Activated T-helper 1 cell treated with anti-CD3 and anti-CD28 coated beads, Interleukin-12 subunit alpha, Interleukin-12 subunit beta, Interleukin-2, Interleukin-4 antibody, amounts not matched to agents 30 ng/mL and 10 ng/mL and 1 ng/mL, durations not matched to agents 14 hours and 24 hours and 36 hours (primary cell): ENCODE measurements at regions of chr13 and their contacts with region 1.

Region 1: DNA sequence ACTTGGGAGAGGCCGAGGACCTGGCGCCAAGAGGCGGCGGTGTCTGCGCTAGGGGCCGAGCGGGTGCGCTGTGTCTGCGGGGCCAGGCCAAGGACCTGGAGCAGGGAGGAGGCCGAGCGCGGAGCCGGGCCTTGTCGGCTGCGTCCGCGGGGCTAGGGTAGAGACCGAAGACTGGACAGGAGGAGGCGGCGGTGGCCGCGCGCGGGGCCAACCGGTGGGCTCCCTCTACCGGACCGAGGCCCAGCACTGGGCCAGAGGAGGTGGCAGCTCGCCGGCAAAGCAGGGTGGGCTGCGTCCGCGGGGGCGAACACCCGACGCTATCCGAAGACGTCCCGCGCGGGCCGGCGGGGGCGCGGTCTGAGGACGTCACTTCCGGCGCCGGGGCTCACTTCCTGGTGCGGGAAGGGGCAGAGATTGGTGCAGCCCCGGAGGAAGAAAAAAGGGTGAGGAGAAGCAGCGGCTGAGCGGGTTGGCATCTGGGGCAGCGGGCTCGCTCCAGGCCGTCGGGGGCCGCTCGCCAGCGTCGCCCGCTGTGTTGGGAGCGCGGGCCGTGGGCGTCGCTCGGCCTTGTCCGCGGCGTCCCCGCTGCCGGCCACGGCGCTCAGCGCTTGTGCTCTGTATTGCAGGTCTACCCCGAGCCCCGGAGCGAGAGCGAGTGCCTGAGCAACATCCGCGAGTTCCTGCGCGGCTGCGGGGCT is 38.3 kb downstream of the ARHGEF7 start:
- DNase-seq: peak; percentile 91
- H3K4me3 Mint-ChIP-seq: peak overlapping the region; percentile 93
- H3K27ac Mint-ChIP-seq: peak overlapping the region; percentile 97
- H3K4me1 Mint-ChIP-seq: peaks cover 25% of the 10 kb centered on the region
- H3K27me3 Mint-ChIP-seq: peaks cover 29% of the 10 kb centered on the region

Region 2: DNA sequence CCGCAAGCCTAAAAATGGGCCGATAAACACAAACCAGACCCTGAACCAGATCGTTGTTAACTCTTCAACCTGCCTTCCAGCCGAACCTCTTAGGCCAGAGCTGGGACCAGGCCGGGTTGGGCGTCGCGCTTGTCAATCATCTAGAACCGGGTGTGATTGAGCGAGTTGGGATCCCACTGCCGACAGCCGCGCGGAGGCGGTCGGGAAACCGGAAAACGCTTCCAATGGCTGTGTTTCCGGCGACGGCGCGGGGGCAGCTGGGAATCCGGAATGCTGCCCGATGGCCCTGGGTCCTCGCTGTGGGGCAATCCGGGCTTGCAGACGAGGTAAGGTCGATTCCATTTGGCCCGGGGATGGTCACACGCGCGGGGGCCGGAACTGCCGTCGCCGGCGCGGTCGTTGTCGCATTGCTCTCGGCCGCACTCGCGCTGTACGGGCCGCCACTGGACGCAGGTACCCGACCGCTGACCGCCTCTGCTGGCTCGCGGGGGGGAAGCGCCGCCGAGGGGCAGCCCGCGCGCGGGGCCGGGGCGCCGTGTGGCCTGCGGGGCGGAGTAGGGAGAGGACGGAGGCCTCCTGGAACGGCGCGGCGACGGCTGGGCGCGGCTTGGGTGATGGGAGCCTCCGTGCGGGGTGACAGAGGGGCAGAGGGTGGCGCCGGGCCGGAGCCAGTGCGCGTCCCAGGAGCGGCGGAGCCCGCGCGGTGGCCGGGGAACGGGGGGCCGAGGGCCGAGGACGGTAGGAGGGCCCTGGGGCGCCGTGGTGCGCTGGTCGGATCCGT is 537.9 kb before region 1 on chr13 and contains the start of gene NAXD:
- intact Hi-C with region 1: loop called (anchors 10 kb)
- DNase-seq: peak; percentile 80
- H3K4me3 Mint-ChIP-seq: peak within 1 kb of the TSS; percentile 96
- H3K27ac Mint-ChIP-seq: peak within 1 kb of the TSS; percentile 94
- H3K4me1 Mint-ChIP-seq: peaks cover 24% of the 10 kb centered on the region
- H3K27me3 Mint-ChIP-seq: peaks cover 4% of the 10 kb centered on the region
- total RNA-seq, gene NAXD: 22.0 and 22.2 TPM in 2 replicates

Region 3: DNA sequence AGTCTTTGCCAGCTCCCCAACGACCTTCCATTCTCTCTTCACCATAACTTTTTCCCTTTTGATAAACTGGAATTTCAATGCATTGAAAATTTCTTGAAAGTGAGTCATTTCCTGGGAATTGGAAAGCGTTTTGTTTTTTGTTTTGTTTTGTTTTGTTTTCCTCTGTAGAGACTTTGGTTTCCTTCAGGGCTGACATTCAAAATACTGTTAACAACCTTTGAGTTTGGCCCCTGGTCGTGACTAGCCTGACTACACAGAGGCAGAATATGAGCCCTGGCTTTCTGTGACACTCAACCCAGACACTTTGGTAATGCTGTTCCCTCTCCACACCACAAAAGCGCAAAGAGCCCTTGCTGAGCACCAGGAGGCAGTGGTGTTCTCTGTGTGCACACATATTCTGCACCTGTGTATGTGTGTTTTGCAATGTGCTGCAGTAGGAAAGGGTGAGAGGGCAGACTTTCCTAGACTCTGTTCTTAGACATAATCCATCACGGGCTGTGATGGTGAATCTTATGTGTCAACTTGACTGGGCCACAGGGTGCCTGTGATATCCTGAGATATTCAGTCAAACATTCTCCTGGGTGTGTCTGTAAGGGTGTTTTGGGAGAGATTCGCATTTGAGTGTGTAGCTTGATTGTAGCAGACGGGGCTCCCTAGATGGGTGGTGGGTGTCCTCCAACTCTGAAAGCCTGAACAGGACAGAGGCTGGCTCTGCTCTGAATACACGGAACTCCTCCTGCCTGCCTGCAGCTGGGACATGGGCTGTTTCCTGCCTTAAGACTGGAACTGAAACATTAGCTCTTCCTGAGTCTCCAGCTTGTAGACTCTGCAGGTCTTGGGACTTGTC is 209.1 kb before region 1 on chr13:
- intact Hi-C with region 1: loop called (anchors 1 kb)
- DNase-seq: peak; percentile 53
- H3K4me3 Mint-ChIP-seq: peak overlapping the region; percentile 51
- H3K27ac Mint-ChIP-seq: peak overlapping the region; percentile 87
- H3K4me1 Mint-ChIP-seq: peaks cover 56% of the 10 kb centered on the region
- H3K27me3 Mint-ChIP-seq: no peaks in the 10 kb centered on the region

Region 4: DNA sequence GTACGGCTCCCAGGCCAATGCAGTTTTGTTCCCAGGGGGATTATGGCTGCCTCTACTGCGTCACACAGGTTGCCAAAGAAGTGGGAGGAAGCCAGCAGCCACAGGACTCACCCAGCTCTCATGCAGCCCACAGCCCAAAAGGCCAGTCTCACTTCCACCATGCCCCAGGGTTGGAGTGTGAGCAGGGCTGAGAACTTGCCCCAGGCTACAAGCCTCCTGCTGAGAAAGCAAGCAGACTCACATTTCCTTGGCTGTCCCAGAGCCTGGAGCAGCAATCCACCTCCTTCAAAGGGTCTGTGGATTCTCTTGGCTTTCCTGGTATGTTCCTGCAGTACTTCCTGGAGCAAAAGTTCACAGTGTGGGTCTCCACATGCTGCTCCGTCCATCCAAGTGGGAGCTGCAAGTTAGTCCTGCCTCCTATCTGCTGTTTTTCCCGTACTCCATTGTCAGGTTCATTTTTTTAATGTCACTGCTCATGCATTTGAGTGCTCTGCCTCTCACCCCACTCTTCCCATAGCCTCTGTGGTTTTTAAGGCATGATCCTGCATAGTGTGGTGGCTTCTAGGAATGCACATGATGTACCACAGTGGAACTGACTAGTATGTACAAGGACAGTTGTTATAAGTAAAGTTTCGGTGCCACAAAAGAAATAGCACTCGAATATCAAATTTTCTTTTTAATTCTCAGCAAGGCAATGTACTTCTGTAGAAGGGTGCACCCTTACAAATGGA is 94.5 kb before region 1 on chr13:
- intact Hi-C with region 1: no loop called
- DNase-seq: no peak
- H3K4me3 Mint-ChIP-seq: no peak overlapping the region
- H3K27ac Mint-ChIP-seq: no peak overlapping the region
- H3K4me1 Mint-ChIP-seq: no peaks in the 10 kb centered on the region
- H3K27me3 Mint-ChIP-seq: peaks cover 52% of the 10 kb centered on the region

Region 5: DNA sequence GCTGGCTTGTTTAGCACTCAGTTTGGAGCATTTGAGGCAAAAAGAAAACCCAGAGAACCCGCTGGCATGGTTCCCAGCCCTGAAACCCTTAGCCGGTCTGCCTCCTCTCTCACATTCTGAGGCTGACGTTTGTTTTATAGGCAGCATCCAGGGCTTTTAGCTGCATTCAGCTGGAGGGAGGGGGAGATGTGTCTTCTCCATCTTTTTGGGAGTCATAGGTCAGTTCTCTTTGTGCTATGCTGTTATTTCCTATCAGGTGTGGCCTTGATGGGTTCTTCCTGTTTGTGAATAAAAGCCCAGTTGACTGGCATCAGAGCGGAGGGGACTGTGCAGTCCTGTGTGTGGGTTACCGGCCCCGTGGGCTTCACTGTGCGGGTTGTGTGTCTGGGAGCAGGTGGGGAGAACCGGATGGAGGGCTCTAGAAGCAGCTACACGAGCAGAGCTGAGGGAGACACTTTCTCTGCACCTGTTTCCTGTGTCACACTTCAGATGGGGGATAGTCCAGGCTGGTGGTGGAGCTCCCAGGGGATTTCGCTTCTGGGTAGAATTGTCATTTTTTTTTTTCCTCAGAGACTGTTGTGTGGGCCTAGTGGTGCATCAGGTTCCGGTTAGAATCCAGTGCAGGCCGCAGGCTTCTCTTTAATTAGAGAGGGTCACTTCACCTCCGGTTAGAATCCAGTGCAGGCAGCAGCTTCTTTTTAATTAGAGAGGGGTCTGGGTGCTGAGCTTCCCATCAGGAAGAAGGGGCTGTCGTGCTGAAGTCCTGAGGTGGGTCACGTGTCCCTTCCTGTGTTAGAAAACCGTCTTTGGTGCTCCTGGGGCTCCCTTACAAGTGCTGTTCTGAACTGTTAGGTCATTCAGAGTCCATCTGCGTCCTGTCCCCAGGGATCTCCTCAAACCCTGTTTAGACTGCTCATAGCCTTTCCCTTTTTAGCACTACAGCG is 31.3 kb after region 1 on chr13:
- intact Hi-C with region 1: loop called (anchors 1 kb)
- DNase-seq: peak; percentile 17
- H3K4me3 Mint-ChIP-seq: peak overlapping the region; percentile 60
- H3K27ac Mint-ChIP-seq: peak overlapping the region; percentile 87
- H3K4me1 Mint-ChIP-seq: peaks cover 88% of the 10 kb centered on the region
- H3K27me3 Mint-ChIP-seq: no peaks in the 10 kb centered on the region

Region 6: DNA sequence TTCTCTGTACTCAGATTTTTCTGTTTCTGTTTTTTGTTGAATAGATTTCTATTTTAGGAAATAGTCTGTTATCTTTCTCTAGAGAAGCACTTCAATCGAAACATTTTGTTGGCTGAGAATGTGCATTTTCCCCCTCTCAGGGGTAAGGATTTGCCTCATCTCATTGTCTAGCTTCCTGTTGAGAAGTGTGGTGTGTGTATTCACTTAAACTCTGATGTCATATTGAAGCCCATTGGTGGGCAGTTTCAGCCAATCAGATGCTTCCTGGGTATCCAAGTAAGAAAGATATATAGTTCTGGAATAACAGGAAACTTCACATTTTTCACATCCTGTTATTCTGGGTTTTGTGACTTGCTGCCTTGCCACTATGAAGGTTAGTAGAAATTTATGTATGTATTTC is 49.3 kb after region 1 on chr13:
- intact Hi-C with region 1: loop called (anchors 5 kb)
- DNase-seq: no peak
- H3K4me3 Mint-ChIP-seq: no peak overlapping the region
- H3K27ac Mint-ChIP-seq: peak overlapping the region; percentile 31
- H3K4me1 Mint-ChIP-seq: peaks cover 55% of the 10 kb centered on the region
- H3K27me3 Mint-ChIP-seq: no peaks in the 10 kb centered on the region

Region 7: DNA sequence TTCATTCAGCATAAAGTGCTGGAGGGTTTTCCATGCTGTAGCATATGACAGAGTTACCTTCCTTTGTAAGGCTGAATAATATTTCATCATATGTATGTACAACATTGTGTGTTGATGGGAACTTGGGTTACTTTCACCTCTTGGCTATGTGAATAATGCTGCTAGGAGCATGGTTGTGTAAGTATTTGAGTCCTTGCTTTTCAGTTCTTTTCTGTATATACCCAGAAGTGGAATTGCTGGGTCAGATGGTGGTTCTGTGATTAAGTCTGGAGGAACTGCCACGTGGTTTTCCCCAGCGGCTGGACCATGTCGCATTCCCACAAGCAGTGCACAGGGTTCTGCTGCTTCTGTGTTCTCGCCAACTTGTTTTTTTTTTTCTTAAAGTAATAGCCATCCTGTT is 65.9 kb after region 1 on chr13:
- intact Hi-C with region 1: loop called (anchors 1 kb)
- DNase-seq: no peak
- H3K4me3 Mint-ChIP-seq: no peak overlapping the region
- H3K27ac Mint-ChIP-seq: no peak overlapping the region
- H3K4me1 Mint-ChIP-seq: peaks cover 36% of the 10 kb centered on the region
- H3K27me3 Mint-ChIP-seq: no peaks in the 10 kb centered on the region

Region 8: DNA sequence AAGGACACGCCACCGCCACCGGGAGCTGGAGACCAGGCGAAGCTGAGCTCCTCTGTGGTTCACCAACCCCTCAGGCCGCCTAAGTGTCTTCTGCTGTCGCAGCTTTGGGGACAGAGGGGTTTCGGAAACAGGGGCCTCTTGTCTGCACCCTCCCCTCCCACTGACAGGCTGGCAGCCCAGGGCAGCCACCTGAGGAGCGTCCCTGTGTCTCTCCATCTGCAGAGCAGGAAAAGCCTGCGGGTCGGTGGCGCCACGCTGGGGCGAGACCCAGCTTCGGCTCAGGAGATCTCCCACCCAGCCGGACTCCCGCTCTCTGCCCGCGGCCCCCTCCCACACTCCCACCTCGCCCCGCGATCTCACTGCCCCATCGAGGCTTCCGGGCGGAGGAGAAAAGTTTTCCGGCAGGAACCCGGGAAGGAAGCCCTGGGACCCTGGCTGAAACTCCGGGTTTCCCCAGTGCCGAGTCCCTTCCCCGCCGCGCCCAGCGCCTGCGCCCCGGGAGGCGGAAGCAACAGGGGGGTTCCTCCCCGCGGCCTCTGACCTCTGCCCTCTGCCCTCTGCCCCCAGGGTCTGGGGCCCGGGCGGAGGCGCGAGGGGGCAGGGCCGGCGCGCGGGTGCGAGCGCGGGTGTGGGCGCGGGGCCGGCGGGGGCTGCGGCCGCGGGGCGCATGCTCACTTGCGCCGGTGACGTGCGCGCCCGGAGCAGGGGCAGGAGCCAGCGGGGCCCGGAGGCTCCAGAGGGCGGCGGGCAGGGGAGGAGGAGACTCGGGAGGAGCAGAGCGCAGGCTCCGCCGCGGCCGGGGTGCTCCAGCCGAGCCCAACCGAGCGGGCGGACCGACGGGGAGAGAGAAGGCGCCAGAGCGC is 1536.1 kb after region 1 on chr13 and contains the start of gene ATP11A:
- intact Hi-C with region 1: loop called (anchors 2 kb)
- DNase-seq: peak; percentile 81
- H3K4me3 Mint-ChIP-seq: peak within 1 kb of the TSS; percentile 84
- H3K27ac Mint-ChIP-seq: peak within 1 kb of the TSS; percentile 94
- H3K4me1 Mint-ChIP-seq: peaks cover 59% of the 10 kb centered on the region
- H3K27me3 Mint-ChIP-seq: no peaks in the 10 kb centered on the region
- total RNA-seq, gene ATP11A: 90.4 and 97.8 TPM in 2 replicates